ENCODE measurements at regions of chr3 and their contacts with region 1.

Region 1: GRCh38 chr3:127217598-127218451 is 24.9 kb downstream of the PRR23E start:
- DNase-seq: no peak
- H3K4me3 ChIP-seq: no peak overlapping the region
- H3K27ac ChIP-seq: no peak overlapping the region
- H3K4me1 ChIP-seq: no peaks in the 10 kb centered on the region
- H3K27me3 ChIP-seq: peaks cover 0 to 4% of the 10 kb centered on the region in 2 donors
- CTCF ChIP-seq: no peak
- POLR2A ChIP-seq: no peak

Region 2: GRCh38 chr3:125240496-125240895 is 1977.3 kb before region 1 on chr3:
- intact Hi-C with region 1: no loop called
- DNase-seq: no peak
- H3K4me3 ChIP-seq: no peak overlapping the region
- H3K27ac ChIP-seq: no peak overlapping the region
- H3K4me1 ChIP-seq: no peaks in the 10 kb centered on the region
- H3K27me3 ChIP-seq: no peaks in the 10 kb centered on the region
- CTCF ChIP-seq: no peak
- POLR2A ChIP-seq: no peak

Region 3: DNA sequence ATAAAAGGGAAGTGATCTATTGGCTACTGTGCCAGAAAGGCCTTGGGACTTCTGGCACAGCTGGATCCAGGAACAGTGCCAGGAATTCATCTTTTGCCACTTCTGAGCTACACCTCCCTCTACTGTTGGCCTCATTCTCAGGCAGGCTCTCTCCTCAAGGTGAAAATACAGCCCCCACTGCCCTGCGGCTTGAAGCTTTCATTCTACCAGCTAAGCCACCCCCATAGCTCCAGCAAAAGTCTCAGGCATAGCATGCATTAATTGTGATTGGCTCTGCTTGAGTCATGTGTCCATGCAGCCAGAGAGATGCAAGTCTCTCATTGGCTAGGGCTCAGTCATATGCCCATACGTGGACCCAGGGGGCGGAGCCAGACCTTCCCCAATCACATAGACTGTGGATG is 230.3 kb after region 1 on chr3:
- intact Hi-C with region 1: loop called (anchors 10 kb)
- DNase-seq: peak; percentile 36 to 49
- H3K4me3 ChIP-seq: no peak overlapping the region
- H3K27ac ChIP-seq: no peak overlapping the region
- H3K4me1 ChIP-seq: no peaks in the 10 kb centered on the region
- H3K27me3 ChIP-seq: no peaks in the 10 kb centered on the region
- CTCF ChIP-seq: no peak
- POLR2A ChIP-seq: no peak